ENCODE measurements at regions of chr19 and their contacts with region 1.

Region 1: DNA sequence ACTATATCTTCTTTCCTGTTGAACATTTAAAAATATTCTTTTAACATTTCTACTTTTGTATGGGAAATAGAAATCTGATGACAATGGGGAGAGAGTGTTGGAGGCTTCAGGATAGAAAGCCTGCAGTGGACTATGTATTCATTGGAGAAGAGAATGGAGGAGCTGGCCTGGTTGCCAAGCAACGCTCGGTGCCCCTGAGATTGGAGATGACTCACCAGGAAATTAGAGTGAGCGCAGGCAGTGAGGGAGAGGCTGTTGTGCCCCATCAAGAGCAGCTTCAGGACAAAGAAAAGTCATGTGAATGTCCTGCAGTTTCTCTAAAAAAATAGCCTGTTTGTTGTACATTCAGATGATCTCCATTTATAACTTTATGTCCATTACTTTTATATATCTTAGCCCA is 48.7 kb upstream of the ZNF835 start:
- DNase-seq: peak in 2 of 5 donors; percentile 10 to 30
- ATAC-seq: peak in 1 of 4 donors; percentile 58
- H3K4me3 ChIP-seq: no peak overlapping the region
- H3K27ac ChIP-seq: no peak overlapping the region
- H3K4me1 ChIP-seq: no peaks in the 10 kb centered on the region
- H3K27me3 ChIP-seq: peaks cover 0 to 10% (median 0%) of the 10 kb centered on the region in 9 donors
- CTCF ChIP-seq: no peak
- POLR2A ChIP-seq: no peak

Region 2: GRCh38 chr19:56577719-56578602 is 142.3 kb before region 1 on chr19:
- intact Hi-C with region 1: no loop called
- DNase-seq: no peak
- ATAC-seq: no peak
- H3K4me3 ChIP-seq: no peak overlapping the region
- H3K27ac ChIP-seq: no peak overlapping the region
- H3K4me1 ChIP-seq: no peaks in the 10 kb centered on the region
- H3K27me3 ChIP-seq: no peaks in the 10 kb centered on the region
- CTCF ChIP-seq: no peak
- POLR2A ChIP-seq: no peak

Region 3: DNA sequence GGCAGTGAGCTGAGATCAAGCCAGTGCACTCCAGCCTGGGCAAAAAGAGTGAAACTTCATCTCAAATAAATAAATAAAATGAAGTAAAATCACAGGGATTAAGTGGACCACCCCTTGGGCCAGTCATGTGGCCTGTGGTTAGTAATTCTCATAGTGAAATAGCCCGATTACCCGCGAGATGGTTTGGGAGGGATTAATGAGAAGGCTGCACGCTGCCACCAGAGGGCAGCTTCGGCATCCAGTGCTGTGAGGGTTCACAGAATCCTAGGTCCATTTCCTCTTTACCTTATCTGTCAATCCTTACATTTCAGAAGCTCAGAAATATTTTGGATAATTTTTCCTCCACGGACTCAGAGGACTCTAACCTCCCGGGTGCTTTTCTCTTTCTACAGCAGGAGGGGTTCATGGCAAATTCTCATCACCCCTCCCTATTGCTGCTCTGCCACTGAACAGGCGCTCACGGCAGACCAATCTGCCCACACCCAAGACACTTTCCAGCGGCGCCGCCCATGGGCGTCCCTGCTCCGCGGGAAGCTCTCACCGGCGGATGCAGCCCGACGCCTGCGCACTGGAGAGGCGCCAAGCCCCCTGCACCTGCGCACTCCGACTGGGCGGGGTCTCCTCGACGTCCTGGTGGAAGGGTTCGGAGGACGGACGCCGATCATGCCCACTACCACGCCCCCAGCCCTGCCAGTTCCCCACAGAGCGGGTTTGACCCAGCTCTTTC is 59.7 kb before region 1 on chr19:
- intact Hi-C with region 1: loop called in 1 of 10 experiments (anchors 5 kb)
- DNase-seq: peak; percentile 17 to 80 (median 58)
- ATAC-seq: peak; percentile 20 to 82 (median 75)
- H3K4me3 ChIP-seq: peak overlapping the region in 10 of 12 donors; percentile 1 to 30 (median 22)
- H3K27ac ChIP-seq: no peak overlapping the region
- H3K4me1 ChIP-seq: peaks cover 0 to 10% (median 3%) of the 10 kb centered on the region in 12 donors
- H3K27me3 ChIP-seq: no peaks in the 10 kb centered on the region
- CTCF ChIP-seq: peak; percentile 26 to 62 (median 46)
- POLR2A ChIP-seq: no peak

Region 4: GRCh38 chr19:56692206-56692895 is 27.9 kb before region 1 on chr19:
- intact Hi-C with region 1: no loop called
- DNase-seq: peak in 1 of 5 donors; percentile 33
- ATAC-seq: peak in 3 of 4 donors; percentile 71 to 83 (median 82)
- H3K4me3 ChIP-seq: no peak overlapping the region
- H3K27ac ChIP-seq: no peak overlapping the region
- H3K4me1 ChIP-seq: no peaks in the 10 kb centered on the region
- H3K27me3 ChIP-seq: no peaks in the 10 kb centered on the region
- CTCF ChIP-seq: no peak
- POLR2A ChIP-seq: no peak